ENCODE measurements at regions of chr2 and their contacts with region 1.

Region 1: GRCh38 chr2:66691031-66691507 is 256.1 kb downstream of the MEIS1 start:
- DNase-seq: no peak
- H3K4me3 ChIP-seq: peak overlapping the region; percentile 37 to 42
- H3K27ac ChIP-seq: peak overlapping the region in 1 of 2 donors; percentile 34
- H3K4me1 ChIP-seq: no peaks in the 10 kb centered on the region
- H3K27me3 ChIP-seq: no peaks in the 10 kb centered on the region
- CTCF ChIP-seq: no peak

Region 2: GRCh38 chr2:66581339-66582103 is 109.5 kb before region 1 on chr2:
- intact Hi-C with region 1: loop called (anchors 5 kb)
- DNase-seq: no peak
- H3K4me3 ChIP-seq: peak overlapping the region; percentile 50 to 59
- H3K27ac ChIP-seq: peak overlapping the region; percentile 49 to 65
- H3K4me1 ChIP-seq: peaks cover 3 to 16% of the 10 kb centered on the region in 2 donors
- H3K27me3 ChIP-seq: peaks cover 16% of the 10 kb centered on the region
- CTCF ChIP-seq: no peak

Region 3: GRCh38 chr2:66665124-66665984 is 25.7 kb before region 1 on chr2:
- intact Hi-C with region 1: no loop called
- DNase-seq: no peak
- H3K4me3 ChIP-seq: no peak overlapping the region
- H3K27ac ChIP-seq: no peak overlapping the region
- H3K4me1 ChIP-seq: no peaks in the 10 kb centered on the region
- H3K27me3 ChIP-seq: no peaks in the 10 kb centered on the region
- CTCF ChIP-seq: no peak

Region 4: GRCh38 chr2:66962625-66963207 is 271.6 kb after region 1 on chr2:
- intact Hi-C with region 1: no loop called
- DNase-seq: no peak
- H3K4me3 ChIP-seq: no peak overlapping the region
- H3K27ac ChIP-seq: no peak overlapping the region
- H3K4me1 ChIP-seq: no peaks in the 10 kb centered on the region
- H3K27me3 ChIP-seq: no peaks in the 10 kb centered on the region
- CTCF ChIP-seq: no peak